CD4-positive, alpha-beta T cell (primary cell): ENCODE measurements at regions of chr1 and their contacts with region 1.

Region 1: GRCh38 chr1:32394141-32394889 is at the start of gene BSDC1:
- DNase-seq: peak; percentile 95 to 99 (median 98)
- ATAC-seq: peak; percentile 97
- H3K4me3 ChIP-seq: peak within 1 kb of the TSS; percentile 85
- H3K4me3 Mint-ChIP-seq: peak within 1 kb of the TSS; percentile 98
- H3K27ac ChIP-seq: peak within 1 kb of the TSS; percentile 92 to 96
- H3K27ac Mint-ChIP-seq: no peak within 1 kb of the TSS
- H3K4me1 ChIP-seq: peaks cover 40% of the 10 kb centered on the region
- H3K4me1 Mint-ChIP-seq: peaks cover 24% of the 10 kb centered on the region
- H3K27me3 ChIP-seq: no peaks in the 10 kb centered on the region
- H3K27me3 Mint-ChIP-seq: no peaks in the 10 kb centered on the region
- CTCF ChIP-seq: no peak
- total RNA-seq, gene BSDC1: 186 to 190 TPM

Region 2: DNA sequence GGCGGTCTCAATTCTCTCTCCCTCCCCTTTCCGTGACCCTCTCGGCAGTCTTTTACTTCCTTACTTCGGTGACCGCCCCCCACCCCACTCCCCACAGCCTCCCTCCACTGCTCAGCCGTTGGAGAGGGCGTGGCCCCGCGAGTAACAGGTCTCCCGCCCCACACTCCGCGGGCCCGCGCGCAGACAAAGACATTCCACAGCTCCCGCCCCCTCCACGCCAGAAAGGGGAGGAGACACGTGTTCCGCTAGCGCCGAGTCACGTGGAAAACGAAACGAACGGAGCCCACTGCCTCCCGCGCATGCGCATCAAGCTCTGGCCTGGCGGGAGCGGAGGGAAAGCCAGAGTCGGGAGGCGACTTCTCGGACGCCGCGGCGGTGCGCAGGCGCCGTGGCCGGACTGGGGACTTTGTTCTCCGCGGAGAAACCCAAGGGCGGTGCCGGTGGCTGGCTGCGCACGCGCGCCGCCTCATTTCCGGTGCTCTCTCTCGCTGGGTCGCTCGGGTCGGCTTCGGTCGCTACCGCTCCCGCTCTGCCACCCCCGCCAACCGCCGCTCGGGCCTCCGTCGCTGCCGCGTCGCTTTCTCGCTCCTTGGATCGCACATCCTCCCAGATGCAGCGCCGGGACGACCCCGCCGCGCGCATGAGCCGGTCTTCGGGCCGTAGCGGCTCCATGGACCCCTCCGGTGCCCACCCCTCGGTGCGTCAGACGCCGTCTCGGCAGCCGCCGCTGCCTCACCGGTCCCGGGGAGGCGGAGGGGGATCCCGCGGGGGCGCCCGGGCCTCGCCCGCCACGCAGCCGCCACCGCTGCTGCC is 380.7 kb before region 1 on chr1 and contains the start of gene KHDRBS1:
- CTCF ChIA-PET with region 1: no interaction called
- POLR2A ChIA-PET with region 1: interaction called, 5 read pairs
- intact Hi-C with region 1: loop called in 1 of 2 experiments (anchors 10 kb)
- DNase-seq: peak; percentile 95 to 100 (median 98)
- ATAC-seq: peak; percentile 85
- H3K4me3 ChIP-seq: peak within 1 kb of the TSS; percentile 73
- H3K4me3 Mint-ChIP-seq: peak within 1 kb of the TSS; percentile 97
- H3K27ac ChIP-seq: peak within 1 kb of the TSS; percentile 71 to 98
- H3K27ac Mint-ChIP-seq: peak within 1 kb of the TSS; percentile 90
- H3K4me1 ChIP-seq: peaks cover 36% of the 10 kb centered on the region
- H3K4me1 Mint-ChIP-seq: peaks cover 36% of the 10 kb centered on the region
- H3K27me3 ChIP-seq: no peaks in the 10 kb centered on the region
- H3K27me3 Mint-ChIP-seq: no peaks in the 10 kb centered on the region
- CTCF ChIP-seq: no peak
- total RNA-seq, gene KHDRBS1: 91.6 to 94.2 TPM

Region 3: GRCh38 chr1:32179443-32180185 is 214.7 kb before region 1 on chr1 and contains the start of gene TXLNA:
- CTCF ChIA-PET with region 1: no interaction called
- POLR2A ChIA-PET with region 1: interaction called, 14 read pairs
- intact Hi-C with region 1: loop called in 1 of 2 experiments (anchors 1 kb)
- DNase-seq: peak; percentile 77 to 94 (median 84)
- ATAC-seq: peak; percentile 85
- H3K4me3 ChIP-seq: peak within 1 kb of the TSS; percentile 90
- H3K4me3 Mint-ChIP-seq: peak within 1 kb of the TSS; percentile 91
- H3K27ac ChIP-seq: peak within 1 kb of the TSS; percentile 77 to 93
- H3K27ac Mint-ChIP-seq: peak within 1 kb of the TSS; percentile 93
- H3K4me1 ChIP-seq: peaks cover 46% of the 10 kb centered on the region
- H3K4me1 Mint-ChIP-seq: peaks cover 49% of the 10 kb centered on the region
- H3K27me3 ChIP-seq: no peaks in the 10 kb centered on the region
- H3K27me3 Mint-ChIP-seq: no peaks in the 10 kb centered on the region
- CTCF ChIP-seq: no peak
- total RNA-seq, gene TXLNA: 6.3 to 6.4 TPM

Region 4: GRCh38 chr1:32221980-32222755 is 172.1 kb before region 1 on chr1 and contains the starts of genes EIF3I and TMEM234:
- CTCF ChIA-PET with region 1: no interaction called
- POLR2A ChIA-PET with region 1: interaction called, 9 read pairs
- intact Hi-C with region 1: loop called in 1 of 2 experiments (anchors 1 kb)
- DNase-seq: peak; percentile 81 to 96 (median 88)
- ATAC-seq: peak; percentile 89
- H3K4me3 ChIP-seq: peak within 1 kb of the TSS; percentile 79
- H3K4me3 Mint-ChIP-seq: peak within 1 kb of the TSS; percentile 99
- H3K27ac ChIP-seq: peak within 1 kb of the TSS; percentile 94
- H3K27ac Mint-ChIP-seq: peak within 1 kb of the TSS; percentile 99
- H3K4me1 ChIP-seq: peaks cover 34% of the 10 kb centered on the region
- H3K4me1 Mint-ChIP-seq: peaks cover 38% of the 10 kb centered on the region
- H3K27me3 ChIP-seq: no peaks in the 10 kb centered on the region
- H3K27me3 Mint-ChIP-seq: no peaks in the 10 kb centered on the region
- CTCF ChIP-seq: no peak
- total RNA-seq, gene EIF3I: 103 to 110 TPM
- total RNA-seq, gene TMEM234: 11.5 to 12.8 TPM

Region 5: DNA sequence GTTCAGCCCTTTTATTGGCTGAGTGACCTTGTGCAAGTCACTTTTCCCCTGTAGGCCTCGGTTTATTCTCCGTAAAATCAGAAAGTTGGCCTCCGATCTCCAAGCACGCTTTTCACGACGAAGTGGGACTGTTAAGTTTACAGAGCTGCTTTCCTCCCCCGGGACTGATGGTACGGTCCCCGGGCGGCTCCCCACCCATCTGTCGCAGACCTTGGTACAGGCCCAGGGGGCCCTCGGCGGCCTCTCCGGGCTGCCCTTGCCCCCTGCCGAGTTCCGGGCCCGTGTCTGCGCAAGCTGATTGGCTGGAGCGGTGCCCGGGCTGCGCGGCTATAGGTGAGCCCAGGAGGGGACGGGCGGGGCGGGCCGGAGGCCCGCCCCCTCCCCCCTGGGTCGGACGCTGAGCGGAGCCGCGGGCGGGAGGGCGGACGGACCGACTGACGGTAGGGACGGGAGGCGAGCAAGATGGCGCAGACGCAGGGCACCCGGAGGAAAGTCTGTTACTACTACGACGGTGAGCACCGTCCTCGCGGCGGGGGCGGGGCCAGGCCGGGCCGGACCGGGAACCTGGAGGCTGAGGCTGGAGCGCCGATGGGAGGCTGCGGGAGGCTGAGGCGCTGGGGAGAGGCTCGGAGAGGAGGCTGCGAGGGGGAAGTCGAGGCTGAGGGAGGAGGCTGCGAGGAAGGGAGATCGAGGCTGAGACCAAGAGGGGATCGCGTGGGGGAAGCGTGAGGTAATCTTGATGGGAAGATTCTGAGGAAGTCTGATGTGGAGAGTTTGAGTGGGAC is 102.4 kb before region 1 on chr1 and contains the start of gene HDAC1:
- CTCF ChIA-PET with region 1: no interaction called
- POLR2A ChIA-PET with region 1: interaction called, 21 read pairs
- intact Hi-C with region 1: no loop called
- DNase-seq: peak; percentile 93 to 98 (median 96)
- ATAC-seq: peak; percentile 91
- H3K4me3 ChIP-seq: peak within 1 kb of the TSS; percentile 98
- H3K4me3 Mint-ChIP-seq: peak within 1 kb of the TSS; percentile 100
- H3K27ac ChIP-seq: peak within 1 kb of the TSS; percentile 81
- H3K27ac Mint-ChIP-seq: peak within 1 kb of the TSS; percentile 92
- H3K4me1 ChIP-seq: peaks cover 67% of the 10 kb centered on the region
- H3K4me1 Mint-ChIP-seq: peaks cover 54% of the 10 kb centered on the region
- H3K27me3 ChIP-seq: no peaks in the 10 kb centered on the region
- H3K27me3 Mint-ChIP-seq: no peaks in the 10 kb centered on the region
- CTCF ChIP-seq: no peak
- total RNA-seq, gene HDAC1: 56.9 to 61.0 TPM

Region 6: GRCh38 chr1:32413507-32414185 is 19.3 kb after region 1 on chr1:
- CTCF ChIA-PET with region 1: no interaction called
- POLR2A ChIA-PET with region 1: no interaction called
- intact Hi-C with region 1: no loop called
- DNase-seq: peak; percentile 48 to 91 (median 66)
- ATAC-seq: peak; percentile 83
- H3K4me3 ChIP-seq: no peak overlapping the region
- H3K4me3 Mint-ChIP-seq: no peak overlapping the region
- H3K27ac ChIP-seq: no peak overlapping the region
- H3K27ac Mint-ChIP-seq: no peak overlapping the region
- H3K4me1 ChIP-seq: peaks cover 2% of the 10 kb centered on the region
- H3K4me1 Mint-ChIP-seq: no peaks in the 10 kb centered on the region
- H3K27me3 ChIP-seq: no peaks in the 10 kb centered on the region
- H3K27me3 Mint-ChIP-seq: peaks cover 20% of the 10 kb centered on the region
- CTCF ChIP-seq: peak; percentile 84

Region 7: GRCh38 chr1:32470991-32471694 is 76.8 kb after region 1 on chr1:
- CTCF ChIA-PET with region 1: no interaction called
- POLR2A ChIA-PET with region 1: no interaction called
- intact Hi-C with region 1: no loop called
- DNase-seq: peak in 1 of 14 experiments; percentile 22
- ATAC-seq: peak; percentile 44
- H3K4me3 ChIP-seq: no peak overlapping the region
- H3K4me3 Mint-ChIP-seq: no peak overlapping the region
- H3K27ac ChIP-seq: no peak overlapping the region
- H3K27ac Mint-ChIP-seq: no peak overlapping the region
- H3K4me1 ChIP-seq: no peaks in the 10 kb centered on the region
- H3K4me1 Mint-ChIP-seq: no peaks in the 10 kb centered on the region
- H3K27me3 ChIP-seq: peaks cover 25 to 28% of the 10 kb centered on the region in 2 experiments
- H3K27me3 Mint-ChIP-seq: peaks cover 40% of the 10 kb centered on the region
- CTCF ChIP-seq: no peak

Region 8: GRCh38 chr1:32650752-32651460 is 256.6 kb after region 1 on chr1 and contains the start of gene RBBP4:
- CTCF ChIA-PET with region 1: no interaction called
- POLR2A ChIA-PET with region 1: interaction called, 21 read pairs
- intact Hi-C with region 1: no loop called
- DNase-seq: peak; percentile 94 to 99 (median 98)
- ATAC-seq: peak; percentile 79
- H3K4me3 ChIP-seq: peak within 1 kb of the TSS; percentile 80
- H3K4me3 Mint-ChIP-seq: peak within 1 kb of the TSS; percentile 94
- H3K27ac ChIP-seq: peak within 1 kb of the TSS; percentile 98 to 99
- H3K27ac Mint-ChIP-seq: peak within 1 kb of the TSS; percentile 95
- H3K4me1 ChIP-seq: peaks cover 58% of the 10 kb centered on the region
- H3K4me1 Mint-ChIP-seq: peaks cover 66% of the 10 kb centered on the region
- H3K27me3 ChIP-seq: no peaks in the 10 kb centered on the region
- H3K27me3 Mint-ChIP-seq: no peaks in the 10 kb centered on the region
- CTCF ChIP-seq: no peak
- total RNA-seq, gene RBBP4: 108 to 117 TPM

Region 9: GRCh38 chr1:32848354-32849063 is 454.2 kb after region 1 on chr1:
- CTCF ChIA-PET with region 1: no interaction called
- POLR2A ChIA-PET with region 1: no interaction called
- intact Hi-C with region 1: no loop called
- DNase-seq: no peak
- ATAC-seq: no peak
- H3K4me3 ChIP-seq: no peak overlapping the region
- H3K4me3 Mint-ChIP-seq: no peak overlapping the region
- H3K27ac ChIP-seq: no peak overlapping the region
- H3K27ac Mint-ChIP-seq: no peak overlapping the region
- H3K4me1 ChIP-seq: no peaks in the 10 kb centered on the region
- H3K4me1 Mint-ChIP-seq: no peaks in the 10 kb centered on the region
- H3K27me3 ChIP-seq: no peaks in the 10 kb centered on the region
- H3K27me3 Mint-ChIP-seq: no peaks in the 10 kb centered on the region
- CTCF ChIP-seq: no peak